CD14-positive monocyte (primary cell): ENCODE measurements at regions of chr3 and their contacts with region 1.

Region 1: GRCh38 chr3:119637679-119638525 is 22.5 kb downstream of the POPDC2 start:
- DNase-seq: peak; percentile 87 to 91 (median 90)
- H3K4me3 ChIP-seq: peak overlapping the region; percentile 5 to 35 (median 22)
- H3K4me3 Mint-ChIP-seq: peak overlapping the region; percentile 72 to 76
- H3K27ac ChIP-seq: peak overlapping the region; percentile 96 to 98
- H3K27ac Mint-ChIP-seq: peak overlapping the region; percentile 98 to 100 (median 100)
- H3K4me1 ChIP-seq: peaks cover 35 to 38% of the 10 kb centered on the region in 2 donors
- H3K4me1 Mint-ChIP-seq: peaks cover 42% of the 10 kb centered on the region
- H3K27me3 ChIP-seq: no peaks in the 10 kb centered on the region
- H3K27me3 Mint-ChIP-seq: peaks cover 0 to 6% (median 0%) of the 10 kb centered on the region in 3 donors
- CTCF ChIP-seq: no peak

Region 2: DNA sequence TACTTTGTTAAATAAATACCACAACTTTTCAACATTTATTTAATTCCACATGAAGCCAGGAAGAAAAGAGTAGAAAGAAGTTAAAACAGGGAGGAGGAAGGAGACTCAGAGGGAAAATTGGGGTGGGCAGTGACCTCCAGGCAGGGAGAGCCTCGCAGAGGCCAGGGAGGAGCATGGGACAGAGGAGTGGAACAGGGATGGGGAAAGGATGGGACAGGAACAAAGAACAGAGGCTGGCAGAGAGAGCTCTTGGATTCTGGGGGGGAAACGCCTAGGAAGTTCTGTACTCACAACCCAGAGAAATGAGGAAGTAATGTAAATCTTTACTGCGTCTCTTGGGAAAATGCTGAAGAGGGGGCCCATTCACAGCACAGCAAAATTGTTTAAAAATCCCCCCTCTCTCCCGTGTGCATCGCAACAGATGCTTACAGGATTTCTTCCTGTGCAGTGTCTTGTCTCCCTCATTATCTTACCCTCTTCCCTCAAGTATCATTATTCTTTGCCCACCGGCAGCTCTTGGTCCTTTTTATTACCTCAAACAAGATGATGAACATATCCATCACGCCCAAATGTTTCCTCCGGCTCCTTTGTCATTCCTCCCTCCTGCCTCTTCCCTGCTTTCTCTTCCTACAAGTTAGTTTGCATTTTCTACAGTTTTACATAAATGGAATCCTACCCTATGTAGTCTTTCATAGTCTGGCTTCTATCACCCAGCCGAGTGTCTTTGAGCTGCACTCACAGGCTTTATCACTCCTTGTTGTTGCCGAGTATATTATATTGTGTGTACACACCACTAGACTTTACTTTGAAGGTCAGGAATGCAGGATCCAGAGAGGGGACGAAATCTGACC is 278.2 kb before region 1 on chr3:
- intact Hi-C with region 1: no loop called
- DNase-seq: peak in 2 of 3 donors; percentile 21 to 33
- H3K4me3 ChIP-seq: no peak overlapping the region
- H3K4me3 Mint-ChIP-seq: peak overlapping the region in 1 of 2 donors; percentile 39
- H3K27ac ChIP-seq: no peak overlapping the region
- H3K27ac Mint-ChIP-seq: peak overlapping the region in 4 of 7 donors; percentile 25 to 68 (median 55)
- H3K4me1 ChIP-seq: peaks cover 7 to 13% of the 10 kb centered on the region in 2 donors
- H3K4me1 Mint-ChIP-seq: peaks cover 15% of the 10 kb centered on the region
- H3K27me3 ChIP-seq: no peaks in the 10 kb centered on the region
- H3K27me3 Mint-ChIP-seq: peaks cover 0 to 5% (median 0%) of the 10 kb centered on the region in 3 donors
- CTCF ChIP-seq: no peak

Region 3: DNA sequence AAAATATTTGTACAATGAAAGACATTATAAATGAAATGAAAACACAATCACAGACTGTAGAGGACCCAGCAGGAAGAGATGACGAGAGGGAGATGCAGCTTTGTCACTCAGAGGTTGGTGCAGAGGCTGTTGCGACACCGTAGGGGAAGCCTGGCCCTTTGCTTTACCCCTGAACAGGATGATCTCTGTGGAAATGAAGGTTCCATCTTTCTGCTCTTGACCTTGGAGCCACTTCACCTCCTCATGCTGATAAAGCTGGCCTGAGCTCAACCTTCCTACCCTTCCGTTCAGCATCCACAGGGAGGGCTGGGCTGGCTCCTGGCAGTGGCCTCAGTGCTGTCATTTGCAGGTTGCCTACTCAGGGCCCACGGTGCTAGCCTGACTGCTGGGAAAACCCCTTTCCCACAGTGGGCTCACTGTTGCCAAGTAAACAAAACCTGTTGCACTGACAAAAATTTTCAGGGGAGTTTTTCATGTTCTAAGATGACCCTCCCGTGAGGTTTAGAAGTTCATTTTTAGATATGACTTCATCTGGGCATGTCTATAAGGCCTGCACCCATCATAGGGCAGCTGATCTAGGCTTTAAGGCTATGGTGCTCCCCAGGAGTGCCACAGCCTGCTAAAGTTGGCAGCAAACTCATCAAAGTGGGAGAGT is 75.5 kb before region 1 on chr3:
- intact Hi-C with region 1: loop called in 1 of 2 experiments (anchors 1 kb)
- DNase-seq: peak; percentile 91 to 97 (median 92)
- H3K4me3 ChIP-seq: no peak overlapping the region
- H3K4me3 Mint-ChIP-seq: peak overlapping the region in 1 of 2 donors; percentile 30
- H3K27ac ChIP-seq: peak overlapping the region; percentile 85 to 95
- H3K27ac Mint-ChIP-seq: peak overlapping the region; percentile 94 to 98 (median 97)
- H3K4me1 ChIP-seq: peaks cover 31 to 33% of the 10 kb centered on the region in 2 donors
- H3K4me1 Mint-ChIP-seq: peaks cover 37% of the 10 kb centered on the region
- H3K27me3 ChIP-seq: no peaks in the 10 kb centered on the region
- H3K27me3 Mint-ChIP-seq: peaks cover 0 to 2% (median 1%) of the 10 kb centered on the region in 3 donors
- CTCF ChIP-seq: no peak

Region 4: DNA sequence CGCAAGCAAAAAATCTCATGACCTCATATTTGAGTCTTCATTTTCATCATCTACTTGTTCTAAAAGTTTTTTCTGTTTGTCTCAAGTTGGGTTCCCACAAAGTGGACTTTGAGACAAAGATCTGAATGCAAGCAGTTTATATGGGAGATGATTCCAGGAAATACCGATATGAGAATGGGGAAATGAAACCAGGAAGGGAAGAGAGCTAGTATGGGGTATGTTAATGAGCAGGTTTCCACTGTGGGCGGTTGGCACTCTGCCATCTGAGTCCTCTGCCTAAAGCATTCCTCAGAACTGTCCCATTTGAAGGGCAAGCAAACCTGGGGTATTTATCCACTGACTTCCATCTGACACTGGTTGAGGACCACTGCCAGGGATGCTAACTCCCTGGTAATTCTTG is 49.8 kb before region 1 on chr3:
- intact Hi-C with region 1: loop called (anchors 2 to 10 kb)
- DNase-seq: peak; percentile 73 to 90 (median 90)
- H3K4me3 ChIP-seq: peak overlapping the region in 1 of 3 experiments; percentile 49
- H3K4me3 Mint-ChIP-seq: peak overlapping the region in 1 of 2 donors; percentile 66
- H3K27ac ChIP-seq: peak overlapping the region; percentile 2 to 84
- H3K27ac Mint-ChIP-seq: peak overlapping the region; percentile 87 to 95 (median 94)
- H3K4me1 ChIP-seq: peaks cover 60% of the 10 kb centered on the region in 2 donors
- H3K4me1 Mint-ChIP-seq: peaks cover 57% of the 10 kb centered on the region
- H3K27me3 ChIP-seq: no peaks in the 10 kb centered on the region
- H3K27me3 Mint-ChIP-seq: peaks cover 0 to 4% (median 0%) of the 10 kb centered on the region in 3 donors
- CTCF ChIP-seq: no peak

Region 5: DNA sequence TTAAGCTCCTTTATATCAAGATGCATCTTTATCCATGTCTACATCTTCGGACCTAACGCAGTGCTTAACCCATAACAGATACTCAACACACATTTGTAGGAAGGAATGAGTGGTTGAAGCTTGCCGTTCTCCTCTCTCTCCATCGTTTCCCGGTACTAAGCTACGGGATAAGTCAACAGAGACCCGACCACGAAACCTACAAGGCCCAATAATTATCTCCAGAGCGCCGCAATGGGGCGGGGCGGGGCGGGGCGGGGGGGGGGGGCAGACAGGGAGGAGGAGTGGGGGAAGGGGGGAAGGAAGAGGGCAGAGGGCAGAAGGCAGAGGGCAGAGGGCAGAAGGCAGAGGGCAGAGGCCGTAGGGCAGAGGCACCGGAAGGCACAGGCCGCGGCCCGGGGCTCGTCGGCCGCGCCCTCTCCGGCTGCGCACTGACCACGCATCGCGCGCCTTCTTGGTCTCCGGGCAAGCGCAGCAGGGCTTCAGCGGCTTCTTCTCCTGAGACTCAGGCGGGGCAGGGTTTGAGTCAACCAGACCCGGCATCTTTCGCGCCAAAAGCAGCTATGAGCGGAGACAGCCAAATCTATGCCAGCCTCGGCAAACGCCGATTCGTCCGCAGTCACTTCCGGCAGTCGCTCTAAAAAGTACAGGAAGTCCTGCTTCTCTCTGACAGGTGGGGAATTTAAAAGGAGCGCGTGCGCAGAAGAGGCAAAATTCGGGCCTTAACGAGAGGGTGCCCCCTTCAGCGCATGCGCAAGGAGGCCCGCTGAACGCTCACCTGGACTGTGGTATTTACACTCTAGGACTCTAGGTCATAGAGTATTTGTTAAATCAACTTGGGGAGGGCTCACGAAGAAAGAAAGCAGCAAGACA is 39.1 kb after region 1 on chr3 and contains the start of gene COX17:
- intact Hi-C with region 1: loop called in 1 of 2 experiments (anchors 5 kb)
- DNase-seq: peak; percentile 95 to 97 (median 95)
- H3K4me3 ChIP-seq: peak within 1 kb of the TSS; percentile 81 to 97 (median 89)
- H3K4me3 Mint-ChIP-seq: peak within 1 kb of the TSS; percentile 83 to 99
- H3K27ac ChIP-seq: peak within 1 kb of the TSS; percentile 94 to 98
- H3K27ac Mint-ChIP-seq: peak within 1 kb of the TSS; percentile 97 to 100 (median 99)
- H3K4me1 ChIP-seq: peaks cover 9 to 20% of the 10 kb centered on the region in 2 donors
- H3K4me1 Mint-ChIP-seq: peaks cover 18% of the 10 kb centered on the region
- H3K27me3 ChIP-seq: no peaks in the 10 kb centered on the region
- H3K27me3 Mint-ChIP-seq: no peaks in the 10 kb centered on the region
- CTCF ChIP-seq: no peak
- polyA plus RNA-seq, gene COX17: 23.0 to 83.6 (median 81.6) TPM

Region 6: GRCh38 chr3:119702530-119703157 is 64.7 kb after region 1 on chr3 and contains the start of gene CFAP91:
- intact Hi-C with region 1: loop called in 1 of 2 experiments (anchors 2 kb)
- DNase-seq: peak; percentile 94 to 98 (median 97)
- H3K4me3 ChIP-seq: peak within 1 kb of the TSS; percentile 15 to 70 (median 35)
- H3K4me3 Mint-ChIP-seq: peak within 1 kb of the TSS; percentile 66 to 82
- H3K27ac ChIP-seq: peak within 1 kb of the TSS; percentile 38 to 70
- H3K27ac Mint-ChIP-seq: peak within 1 kb of the TSS in 6 of 7 donors; percentile 26 to 88 (median 84)
- H3K4me1 ChIP-seq: peaks cover 32 to 34% of the 10 kb centered on the region in 2 donors
- H3K4me1 Mint-ChIP-seq: peaks cover 28% of the 10 kb centered on the region
- H3K27me3 ChIP-seq: peaks cover 4 to 6% of the 10 kb centered on the region in 2 donors
- H3K27me3 Mint-ChIP-seq: peaks cover 2 to 18% (median 6%) of the 10 kb centered on the region in 3 donors
- CTCF ChIP-seq: no peak
- polyA plus RNA-seq, gene CFAP91: 0.14 TPM in 1 of 3 donors, not detected in the others